B cell (primary cell): ENCODE measurements at regions of chr12 and their contacts with region 1.

Region 1: DNA sequence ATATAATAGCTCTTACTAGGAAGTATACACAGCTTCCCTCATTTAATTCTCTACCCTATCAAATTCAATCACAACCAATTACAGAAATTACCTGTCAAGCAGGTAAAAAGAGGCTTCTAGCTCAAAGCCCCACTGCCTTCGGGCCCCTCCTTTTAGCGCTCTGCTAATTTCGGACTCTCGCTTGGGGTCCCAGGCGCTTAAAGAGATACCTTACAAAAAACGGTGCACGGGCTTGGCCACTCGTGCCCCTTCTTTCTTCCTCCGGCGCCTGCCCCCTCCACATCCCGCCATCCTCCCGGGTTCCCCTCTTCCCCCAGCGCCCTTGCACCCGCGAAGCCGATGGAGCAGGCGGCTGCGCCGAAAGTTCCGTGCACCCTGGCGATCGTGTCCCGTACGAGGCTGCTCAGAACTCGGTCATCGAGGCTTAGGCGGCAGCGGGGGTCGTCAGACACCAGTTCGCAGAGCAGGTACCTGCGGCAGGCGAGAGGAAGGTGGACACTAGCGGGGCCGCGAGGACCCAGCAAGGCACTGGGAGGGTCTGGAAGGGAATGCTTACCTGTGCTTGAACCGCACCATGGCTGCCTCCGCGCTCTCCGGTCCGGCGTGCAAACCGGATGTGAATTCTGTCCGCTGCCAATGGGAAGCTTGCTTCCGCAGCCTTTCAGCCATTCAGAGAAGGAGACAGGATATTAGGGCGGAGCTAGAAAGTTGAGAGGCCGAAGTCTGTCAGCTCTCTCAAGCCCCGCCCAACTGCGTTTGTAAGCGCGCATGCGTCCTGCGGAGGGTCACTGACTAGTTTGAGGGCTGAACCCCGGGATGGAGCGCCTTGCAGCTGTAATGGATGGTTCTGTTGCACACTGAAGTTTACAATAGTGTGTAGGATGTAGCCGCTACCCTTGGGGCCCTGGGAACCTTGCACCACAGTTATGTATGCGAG is at the start of gene POP5:
- DNase-seq: peak; percentile 96
- ATAC-seq: peak; percentile 97
- H3K4me3 ChIP-seq: peak within 1 kb of the TSS; percentile 58 to 99 (median 96)
- H3K4me3 Mint-ChIP-seq: peak within 1 kb of the TSS; percentile 98
- H3K27ac ChIP-seq: peak within 1 kb of the TSS; percentile 47 to 70
- H3K27ac Mint-ChIP-seq: peak within 1 kb of the TSS; percentile 93
- H3K4me1 ChIP-seq: peaks cover 28 to 37% of the 10 kb centered on the region in 2 donors
- H3K4me1 Mint-ChIP-seq: peaks cover 40% of the 10 kb centered on the region
- H3K27me3 ChIP-seq: peaks cover 0 to 24% (median 9%) of the 10 kb centered on the region in 4 experiments
- H3K27me3 Mint-ChIP-seq: peaks cover 10% of the 10 kb centered on the region
- CTCF ChIP-seq: no peak
- total RNA-seq, gene POP5: 60.6 and 61.4 TPM in 2 replicates

Region 2: DNA sequence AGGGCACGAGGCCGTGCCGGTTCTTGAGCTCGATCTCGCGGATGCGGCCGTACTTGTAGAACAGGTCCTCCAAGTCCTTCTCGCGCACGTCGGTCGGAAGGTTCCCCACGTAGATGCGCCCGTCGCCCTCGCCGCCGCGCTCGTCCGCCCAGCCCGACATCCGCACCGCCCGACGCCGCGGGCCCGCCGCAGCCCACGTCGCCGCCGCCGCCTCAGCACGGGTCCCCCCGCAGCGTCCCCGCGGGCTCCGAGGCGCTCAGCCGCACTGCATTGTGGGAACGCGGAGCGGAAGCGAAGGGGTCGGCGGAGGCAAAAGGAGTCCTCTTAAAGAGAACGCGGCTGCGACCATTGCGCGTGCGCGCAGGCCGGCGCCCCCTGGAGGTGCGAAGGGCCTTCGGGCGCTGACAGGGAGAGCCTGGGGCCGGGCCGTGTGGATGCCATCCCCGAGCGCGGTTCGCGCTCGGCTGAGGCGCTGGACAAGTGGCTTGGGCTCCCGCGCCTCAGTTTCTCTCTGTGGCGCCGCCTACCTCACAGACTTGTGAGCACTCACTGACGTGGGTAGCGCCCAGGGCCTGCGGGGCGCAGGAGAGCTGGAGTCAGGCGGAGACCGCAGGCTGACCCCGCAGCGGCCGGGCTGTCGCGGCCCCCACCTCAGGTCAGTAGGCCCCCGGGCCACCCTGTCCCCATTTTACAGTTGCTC is 111.5 kb before region 1 on chr12 and contains the start of gene SRSF9:
- CTCF ChIA-PET with region 1: interaction called, 4 read pairs
- POLR2A ChIA-PET with region 1: no interaction called
- intact Hi-C with region 1: loop called (anchors 1 kb)
- DNase-seq: peak; percentile 99
- ATAC-seq: peak; percentile 87
- H3K4me3 ChIP-seq: peak within 1 kb of the TSS; percentile 62 to 81 (median 74)
- H3K4me3 Mint-ChIP-seq: peak within 1 kb of the TSS; percentile 91
- H3K27ac ChIP-seq: peak within 1 kb of the TSS; percentile 80 to 94
- H3K27ac Mint-ChIP-seq: peak within 1 kb of the TSS; percentile 89
- H3K4me1 ChIP-seq: peaks cover 20% of the 10 kb centered on the region in 2 donors
- H3K4me1 Mint-ChIP-seq: peaks cover 33% of the 10 kb centered on the region
- H3K27me3 ChIP-seq: no peaks in the 10 kb centered on the region
- H3K27me3 Mint-ChIP-seq: no peaks in the 10 kb centered on the region
- CTCF ChIP-seq: peak; percentile 95
- total RNA-seq, gene SRSF9: 151 and 157 TPM in 2 replicates

Region 3: GRCh38 chr12:120481022-120481767 is 99.9 kb before region 1 on chr12:
- CTCF ChIA-PET with region 1: no interaction called
- POLR2A ChIA-PET with region 1: no interaction called
- intact Hi-C with region 1: no loop called
- DNase-seq: no peak
- ATAC-seq: no peak
- H3K4me3 ChIP-seq: no peak overlapping the region
- H3K4me3 Mint-ChIP-seq: no peak overlapping the region
- H3K27ac ChIP-seq: no peak overlapping the region
- H3K27ac Mint-ChIP-seq: no peak overlapping the region
- H3K4me1 ChIP-seq: no peaks in the 10 kb centered on the region
- H3K4me1 Mint-ChIP-seq: peaks cover 2% of the 10 kb centered on the region
- H3K27me3 ChIP-seq: no peaks in the 10 kb centered on the region
- H3K27me3 Mint-ChIP-seq: no peaks in the 10 kb centered on the region
- CTCF ChIP-seq: no peak

Region 4: DNA sequence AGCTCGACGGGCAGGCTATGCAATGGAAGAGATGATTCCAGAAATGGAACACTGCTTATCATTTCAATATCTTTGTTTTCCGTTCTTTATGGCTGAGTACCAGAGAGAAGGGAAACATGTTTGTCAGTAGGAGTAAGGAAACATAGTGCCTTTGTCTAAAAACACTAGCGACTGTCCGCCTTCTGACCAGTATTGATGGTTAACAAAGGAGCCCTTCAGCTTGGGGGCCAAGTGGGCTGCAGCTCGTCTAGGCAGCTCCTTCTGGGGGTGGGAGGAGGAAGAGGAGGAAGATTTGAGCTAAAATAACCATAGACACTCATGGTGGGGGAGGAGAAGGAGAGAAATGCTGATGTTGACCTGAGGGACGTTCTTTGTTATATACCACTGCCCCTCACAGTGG is 67.1 kb before region 1 on chr12:
- CTCF ChIA-PET with region 1: no interaction called
- POLR2A ChIA-PET with region 1: no interaction called
- intact Hi-C with region 1: no loop called
- DNase-seq: no peak
- ATAC-seq: no peak
- H3K4me3 ChIP-seq: no peak overlapping the region
- H3K4me3 Mint-ChIP-seq: no peak overlapping the region
- H3K27ac ChIP-seq: no peak overlapping the region
- H3K27ac Mint-ChIP-seq: no peak overlapping the region
- H3K4me1 ChIP-seq: no peaks in the 10 kb centered on the region
- H3K4me1 Mint-ChIP-seq: no peaks in the 10 kb centered on the region
- H3K27me3 ChIP-seq: no peaks in the 10 kb centered on the region
- H3K27me3 Mint-ChIP-seq: no peaks in the 10 kb centered on the region
- CTCF ChIP-seq: no peak

Region 5: GRCh38 chr12:120649442-120650232 is 68.6 kb after region 1 on chr12:
- CTCF ChIA-PET with region 1: interaction called, 44 read pairs
- POLR2A ChIA-PET with region 1: no interaction called
- intact Hi-C with region 1: loop called (anchors 1 kb)
- DNase-seq: no peak
- ATAC-seq: no peak
- H3K4me3 ChIP-seq: peak overlapping the region in 1 of 5 experiments; percentile 37
- H3K4me3 Mint-ChIP-seq: peak overlapping the region; percentile 76
- H3K27ac ChIP-seq: no peak overlapping the region
- H3K27ac Mint-ChIP-seq: no peak overlapping the region
- H3K4me1 ChIP-seq: peaks cover 16 to 23% of the 10 kb centered on the region in 2 donors
- H3K4me1 Mint-ChIP-seq: peaks cover 22% of the 10 kb centered on the region
- H3K27me3 ChIP-seq: peaks cover 0 to 52% (median 18%) of the 10 kb centered on the region in 4 experiments
- H3K27me3 Mint-ChIP-seq: peaks cover 51% of the 10 kb centered on the region
- CTCF ChIP-seq: peak; percentile 52

Region 6: DNA sequence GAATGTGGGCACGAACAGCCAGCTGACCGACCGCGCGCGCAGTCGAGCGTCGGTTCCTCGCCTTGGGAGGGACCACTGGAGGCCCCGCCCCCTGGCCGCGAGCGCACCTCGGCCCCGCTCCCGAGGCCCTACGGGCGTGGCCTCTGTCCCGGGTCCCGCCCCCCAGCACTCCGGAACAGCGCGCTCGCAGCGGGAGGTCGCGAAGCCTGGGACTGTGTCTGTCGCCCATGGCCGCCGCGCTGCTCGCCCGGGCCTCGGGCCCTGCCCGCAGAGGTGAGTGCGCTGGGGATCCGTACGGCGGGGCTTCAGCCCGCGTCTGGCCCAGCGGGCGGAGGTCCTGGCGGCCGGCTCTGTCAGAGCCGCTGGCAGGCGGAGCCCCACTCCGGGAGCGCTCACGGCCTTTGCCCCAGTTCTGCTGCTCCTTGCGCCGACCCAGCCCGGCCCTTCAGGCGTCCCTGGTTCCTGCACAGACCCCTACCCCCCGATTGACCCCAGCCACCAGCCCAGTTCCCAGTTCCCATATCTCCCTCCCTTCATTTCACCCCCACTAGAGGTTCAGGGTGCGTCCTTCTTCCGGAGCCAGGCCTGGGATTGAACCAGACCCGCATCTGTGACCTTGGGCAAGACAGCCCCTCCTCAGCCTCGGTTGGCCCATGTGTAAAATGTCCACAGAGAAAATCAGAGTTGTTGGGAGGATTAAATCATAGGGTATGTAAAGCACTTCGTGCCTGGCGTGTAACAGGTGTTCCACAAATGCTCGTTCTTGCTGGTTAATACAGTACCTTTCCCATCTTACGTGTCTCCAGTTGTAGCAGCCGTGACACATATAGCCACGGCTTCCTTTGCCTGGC is 144.8 kb after region 1 on chr12 and contains the start of gene ACADS:
- CTCF ChIA-PET with region 1: interaction called, 3 read pairs
- POLR2A ChIA-PET with region 1: interaction called, 4 read pairs
- intact Hi-C with region 1: loop called (anchors 1 kb)
- DNase-seq: peak; percentile 91
- ATAC-seq: peak; percentile 100
- H3K4me3 ChIP-seq: peak within 1 kb of the TSS; percentile 44 to 73 (median 63)
- H3K4me3 Mint-ChIP-seq: peak within 1 kb of the TSS; percentile 90
- H3K27ac ChIP-seq: peak within 1 kb of the TSS in 1 of 2 donors; percentile 61
- H3K27ac Mint-ChIP-seq: peak within 1 kb of the TSS; percentile 46
- H3K4me1 ChIP-seq: peaks cover 28 to 30% of the 10 kb centered on the region in 2 donors
- H3K4me1 Mint-ChIP-seq: peaks cover 34% of the 10 kb centered on the region
- H3K27me3 ChIP-seq: no peaks in the 10 kb centered on the region
- H3K27me3 Mint-ChIP-seq: no peaks in the 10 kb centered on the region
- CTCF ChIP-seq: no peak
- total RNA-seq, gene ACADS: 10.0 and 10.1 TPM in 2 replicates

Region 7: DNA sequence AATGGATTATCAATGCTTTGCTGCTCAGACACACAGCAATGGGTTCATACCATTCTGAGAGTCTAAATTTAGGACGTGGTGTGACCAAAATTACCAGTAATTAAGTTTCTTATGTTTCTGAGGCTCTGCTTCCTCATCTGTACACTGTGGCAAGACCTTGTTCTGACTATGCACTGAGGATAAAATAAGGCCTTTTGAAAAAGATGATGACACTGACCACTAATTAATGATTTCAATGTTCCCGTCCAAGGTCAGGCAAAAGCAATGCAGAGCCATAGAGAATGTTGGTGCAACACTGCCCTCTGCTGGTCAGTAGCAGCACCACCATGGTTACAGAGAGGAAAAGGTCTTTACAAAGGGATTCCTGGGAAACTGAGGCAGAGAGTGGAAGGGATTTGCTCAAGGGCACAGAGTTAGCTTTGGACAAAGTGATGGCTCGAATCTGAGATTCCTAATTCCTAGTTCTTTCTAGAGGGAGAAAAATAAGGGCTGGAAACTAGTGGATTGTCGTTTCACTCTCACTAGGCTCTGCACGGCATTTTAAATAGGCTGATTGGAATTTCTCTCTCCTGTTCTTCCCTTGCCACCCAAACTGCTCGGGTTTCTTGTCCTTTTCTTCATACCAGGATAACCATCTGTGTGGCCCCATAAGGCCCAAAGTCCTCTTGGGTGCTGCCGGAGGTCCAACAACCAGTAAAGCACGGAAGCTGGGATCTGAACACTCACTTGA is 529.3 kb after region 1 on chr12:
- CTCF ChIA-PET with region 1: interaction called, 23 read pairs
- POLR2A ChIA-PET with region 1: no interaction called
- intact Hi-C with region 1: loop called (anchors 1 kb)
- DNase-seq: peak; percentile 78
- ATAC-seq: peak; percentile 71
- H3K4me3 ChIP-seq: no peak overlapping the region
- H3K4me3 Mint-ChIP-seq: no peak overlapping the region
- H3K27ac ChIP-seq: no peak overlapping the region
- H3K27ac Mint-ChIP-seq: no peak overlapping the region
- H3K4me1 ChIP-seq: peaks cover 0 to 6% of the 10 kb centered on the region in 2 donors
- H3K4me1 Mint-ChIP-seq: peaks cover 4% of the 10 kb centered on the region
- H3K27me3 ChIP-seq: no peaks in the 10 kb centered on the region
- H3K27me3 Mint-ChIP-seq: no peaks in the 10 kb centered on the region
- CTCF ChIP-seq: peak; percentile 99